Caco-2 (cell line): ENCODE measurements at regions of chr18 and their contacts with region 1.

Region 1: DNA sequence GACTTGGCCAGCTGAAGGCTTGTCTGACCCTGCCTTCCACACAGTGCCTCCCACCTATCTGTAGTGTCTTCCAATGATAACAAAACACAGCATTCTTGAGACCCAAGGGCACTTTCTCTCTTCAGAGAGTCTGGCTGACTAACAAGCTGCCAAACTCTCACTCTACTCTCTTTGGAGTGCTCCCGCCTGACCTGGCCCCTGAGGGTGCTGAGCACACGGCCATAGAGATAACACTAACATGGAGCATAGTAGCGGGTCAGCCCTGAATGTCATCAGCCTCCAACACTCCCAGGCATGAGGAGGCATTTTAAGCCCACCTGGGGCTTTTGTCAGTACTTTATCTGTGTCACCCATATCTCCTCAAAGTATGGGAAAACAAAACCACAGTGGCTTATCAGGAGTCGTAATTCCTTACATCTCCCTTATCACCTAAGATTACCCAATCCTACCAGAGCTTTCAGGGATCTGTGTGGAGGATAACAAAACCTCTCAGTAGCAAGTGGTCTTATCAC is 160.3 kb upstream of the TCF4 start:
- DNase-seq: peak; percentile 77 to 88
- H3K4me3 ChIP-seq: no peak overlapping the region
- H3K4me3 Mint-ChIP-seq: peak overlapping the region; percentile 47
- H3K27ac Mint-ChIP-seq: peak overlapping the region; percentile 88
- H3K4me1 ChIP-seq: peaks cover 30% of the 10 kb centered on the region
- H3K4me1 Mint-ChIP-seq: peaks cover 15% of the 10 kb centered on the region
- H3K27me3 ChIP-seq: no peaks in the 10 kb centered on the region
- H3K27me3 Mint-ChIP-seq: no peaks in the 10 kb centered on the region
- CTCF ChIP-seq: no peak

Region 2: GRCh38 chr18:55264108-55264507 is 484.2 kb before region 1 on chr18:
- CTCF ChIA-PET with region 1: no interaction called
- POLR2A ChIA-PET with region 1: no interaction called
- intact Hi-C with region 1: loop called (anchors 5 kb)
- DNase-seq: peak; percentile 49 to 50
- H3K4me3 ChIP-seq: no peak overlapping the region
- H3K4me3 Mint-ChIP-seq: no peak overlapping the region
- H3K27ac Mint-ChIP-seq: peak overlapping the region; percentile 48
- H3K4me1 ChIP-seq: peaks cover 66% of the 10 kb centered on the region
- H3K4me1 Mint-ChIP-seq: peaks cover 8% of the 10 kb centered on the region
- H3K27me3 ChIP-seq: no peaks in the 10 kb centered on the region
- H3K27me3 Mint-ChIP-seq: no peaks in the 10 kb centered on the region
- CTCF ChIP-seq: no peak

Region 3: GRCh38 chr18:55509631-55510324 is 238.5 kb before region 1 on chr18:
- CTCF ChIA-PET with region 1: no interaction called
- POLR2A ChIA-PET with region 1: no interaction called
- intact Hi-C with region 1: loop called (anchors 5 kb)
- DNase-seq: no peak
- H3K4me3 ChIP-seq: no peak overlapping the region
- H3K4me3 Mint-ChIP-seq: no peak overlapping the region
- H3K27ac Mint-ChIP-seq: no peak overlapping the region
- H3K4me1 ChIP-seq: peaks cover 19% of the 10 kb centered on the region
- H3K4me1 Mint-ChIP-seq: no peaks in the 10 kb centered on the region
- H3K27me3 ChIP-seq: no peaks in the 10 kb centered on the region
- H3K27me3 Mint-ChIP-seq: no peaks in the 10 kb centered on the region
- CTCF ChIP-seq: no peak

Region 4: GRCh38 chr18:55577812-55578539 is 170.3 kb before region 1 on chr18:
- CTCF ChIA-PET with region 1: no interaction called
- POLR2A ChIA-PET with region 1: no interaction called
- intact Hi-C with region 1: loop called (anchors 1 kb)
- DNase-seq: no peak
- H3K4me3 ChIP-seq: no peak overlapping the region
- H3K4me3 Mint-ChIP-seq: no peak overlapping the region
- H3K27ac Mint-ChIP-seq: no peak overlapping the region
- H3K4me1 ChIP-seq: peaks cover 34% of the 10 kb centered on the region
- H3K4me1 Mint-ChIP-seq: peaks cover 8% of the 10 kb centered on the region
- H3K27me3 ChIP-seq: no peaks in the 10 kb centered on the region
- H3K27me3 Mint-ChIP-seq: no peaks in the 10 kb centered on the region
- CTCF ChIP-seq: peak in 1 of 2 experiments; percentile 16

Region 5: GRCh38 chr18:55634545-55634944 is 113.7 kb before region 1 on chr18:
- CTCF ChIA-PET with region 1: no interaction called
- POLR2A ChIA-PET with region 1: no interaction called
- intact Hi-C with region 1: loop called (anchors 10 kb)
- DNase-seq: no peak
- H3K4me3 ChIP-seq: no peak overlapping the region
- H3K4me3 Mint-ChIP-seq: no peak overlapping the region
- H3K27ac Mint-ChIP-seq: peak overlapping the region; percentile 59
- H3K4me1 ChIP-seq: peaks cover 5% of the 10 kb centered on the region; the same call in 1 of the 2 replicates
- H3K4me1 Mint-ChIP-seq: peaks cover 17% of the 10 kb centered on the region
- H3K27me3 ChIP-seq: no peaks in the 10 kb centered on the region
- H3K27me3 Mint-ChIP-seq: no peaks in the 10 kb centered on the region
- CTCF ChIP-seq: no peak

Region 6: DNA sequence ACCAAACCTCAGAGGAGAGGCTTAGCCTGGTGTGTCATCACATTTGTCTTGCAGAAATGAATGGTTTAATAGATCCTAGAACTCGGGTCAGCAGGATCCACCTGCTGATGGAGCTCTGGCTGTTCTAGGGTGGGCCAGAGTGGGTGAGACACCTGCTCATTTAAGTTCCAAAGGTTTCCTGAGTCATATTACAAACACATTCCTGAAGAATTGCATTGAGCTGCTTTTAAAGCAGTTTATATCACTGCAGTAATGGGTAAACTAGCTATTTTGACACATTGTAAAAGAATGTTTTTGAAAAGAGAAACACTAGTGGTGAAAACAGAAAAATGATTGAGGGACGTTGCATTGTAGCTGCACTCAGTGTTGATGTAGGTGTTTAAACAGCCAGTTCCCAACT is 15.0 kb after region 1 on chr18:
- CTCF ChIA-PET with region 1: interaction called, 6 read pairs
- POLR2A ChIA-PET with region 1: interaction called, 3 read pairs
- intact Hi-C with region 1: loop called (anchors 1 kb)
- DNase-seq: peak; percentile 60 to 66
- H3K4me3 ChIP-seq: no peak overlapping the region
- H3K4me3 Mint-ChIP-seq: peak overlapping the region; percentile 6
- H3K27ac Mint-ChIP-seq: peak overlapping the region; percentile 81
- H3K4me1 ChIP-seq: peaks cover 42% of the 10 kb centered on the region
- H3K4me1 Mint-ChIP-seq: peaks cover 35% of the 10 kb centered on the region
- H3K27me3 ChIP-seq: no peaks in the 10 kb centered on the region
- H3K27me3 Mint-ChIP-seq: no peaks in the 10 kb centered on the region
- CTCF ChIP-seq: no peak

Region 7: DNA sequence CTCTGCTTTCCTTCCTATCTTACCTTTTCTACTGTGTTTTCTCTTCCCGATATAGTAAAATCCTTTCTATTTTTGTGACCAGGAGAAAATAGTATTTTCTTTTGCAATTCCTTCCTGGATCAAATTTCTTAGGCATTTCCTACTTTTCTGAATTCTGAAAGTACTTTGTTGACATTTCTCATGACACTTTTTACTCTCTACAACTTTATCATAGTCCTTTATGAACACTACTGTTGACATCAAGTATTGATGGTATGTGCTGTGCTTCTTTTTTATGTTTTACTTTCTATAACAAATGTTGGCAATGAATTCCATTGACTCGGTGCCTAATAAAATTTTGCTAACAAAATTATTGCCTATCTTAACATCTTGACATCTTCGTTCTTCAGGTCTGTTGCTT is 57.4 kb after region 1 on chr18:
- CTCF ChIA-PET with region 1: no interaction called
- POLR2A ChIA-PET with region 1: no interaction called
- intact Hi-C with region 1: no loop called
- DNase-seq: no peak
- H3K4me3 ChIP-seq: no peak overlapping the region
- H3K4me3 Mint-ChIP-seq: no peak overlapping the region
- H3K27ac Mint-ChIP-seq: no peak overlapping the region
- H3K4me1 ChIP-seq: no peaks in the 10 kb centered on the region
- H3K4me1 Mint-ChIP-seq: no peaks in the 10 kb centered on the region
- H3K27me3 ChIP-seq: no peaks in the 10 kb centered on the region
- H3K27me3 Mint-ChIP-seq: no peaks in the 10 kb centered on the region
- CTCF ChIP-seq: no peak